Psoas muscle (tissue), 8 donors: ENCODE measurements at regions of chr2 and their contacts with region 1.

Region 1: DNA sequence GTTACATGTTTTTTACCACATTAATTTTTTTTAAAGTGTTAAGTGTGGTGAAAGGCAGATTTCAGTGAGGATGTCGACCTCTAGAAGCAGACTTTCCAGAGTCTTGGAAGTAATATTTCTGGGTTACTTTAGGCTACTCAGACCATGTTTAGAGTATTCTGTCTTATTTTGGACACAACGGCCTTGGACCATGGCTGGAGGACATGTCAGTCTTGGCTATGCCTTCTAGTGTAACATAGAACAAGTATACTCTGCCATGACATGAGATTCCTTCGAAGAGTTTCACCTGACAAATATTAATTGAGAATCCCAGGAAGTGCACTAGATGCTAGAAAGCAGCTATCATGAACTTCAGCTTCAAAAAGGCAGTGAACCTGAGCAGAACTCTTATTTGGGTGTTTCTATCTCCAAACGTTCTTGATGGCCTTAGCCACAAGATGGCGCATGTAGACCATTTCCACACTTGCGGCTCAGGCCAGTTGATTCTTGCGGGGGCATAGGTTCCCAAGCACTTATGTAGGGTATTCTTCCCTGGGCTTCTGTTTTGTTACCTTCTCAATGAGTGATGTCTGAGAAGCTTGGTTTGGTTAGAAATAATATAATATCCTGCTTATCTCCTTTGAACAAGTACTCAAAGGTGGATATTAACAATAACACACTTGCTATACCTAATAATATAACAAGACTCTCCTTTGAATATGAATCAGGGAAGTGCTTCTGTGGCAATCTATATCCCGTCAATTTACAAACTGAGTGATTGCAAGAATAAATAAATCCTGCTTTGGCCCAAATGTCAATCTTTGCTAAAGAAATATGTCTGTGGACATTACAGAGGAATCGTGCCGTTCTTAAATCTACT is 62.0 kb downstream of the CACNB4 start:
- DNase-seq: peak; percentile 41 to 68
- ATAC-seq: peak; percentile 78 to 92 (median 81)
- H3K4me3 ChIP-seq: no peak overlapping the region
- H3K27ac ChIP-seq: no peak overlapping the region
- H3K4me1 ChIP-seq: peaks cover 8% of the 10 kb centered on the region
- H3K27me3 ChIP-seq: no peaks in the 10 kb centered on the region
- CTCF ChIP-seq: peak; percentile 86

Region 2: DNA sequence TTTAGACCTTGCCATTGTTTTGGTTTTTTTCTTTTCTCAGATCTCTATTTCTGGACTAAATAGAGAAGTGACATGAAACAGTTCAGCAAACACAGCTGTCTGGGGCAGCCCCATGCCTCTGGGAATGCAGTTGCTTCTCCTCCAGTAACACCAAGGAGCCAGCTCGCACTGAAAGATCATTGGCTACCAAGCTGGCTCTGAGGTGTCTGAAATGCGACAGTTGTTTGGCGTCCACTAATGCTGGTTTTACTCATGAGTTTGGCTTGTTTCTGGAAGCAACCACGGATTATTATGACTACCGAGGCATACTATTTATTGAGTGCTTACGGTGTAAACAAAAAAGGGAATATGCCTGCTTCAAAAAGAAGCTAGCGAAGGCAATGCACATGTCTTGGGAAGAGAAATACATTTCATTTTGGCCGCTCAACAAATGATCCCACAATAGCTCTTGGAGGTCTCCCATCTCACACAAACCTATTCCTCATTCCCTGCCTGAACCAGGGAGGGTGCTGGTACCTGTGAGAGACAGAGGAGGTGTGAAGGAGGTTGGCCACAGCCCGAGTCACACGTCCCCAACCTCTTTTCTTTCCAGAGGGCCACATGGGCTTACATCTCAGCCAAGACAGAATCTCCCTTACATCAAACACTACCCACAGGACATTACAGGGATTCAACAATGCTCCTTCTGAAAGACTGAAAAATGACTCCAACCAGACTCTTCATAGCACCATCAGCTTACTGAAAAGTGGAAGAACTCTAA is 265.1 kb before region 1 on chr2:
- intact Hi-C with region 1: no loop called
- DNase-seq: peak; percentile 58 to 85
- ATAC-seq: peak; percentile 87 to 93 (median 90)
- H3K4me3 ChIP-seq: peak overlapping the region; percentile 28
- H3K27ac ChIP-seq: peak overlapping the region; percentile 82
- H3K4me1 ChIP-seq: peaks cover 63% of the 10 kb centered on the region
- H3K27me3 ChIP-seq: no peaks in the 10 kb centered on the region
- CTCF ChIP-seq: no peak

Region 3: GRCh38 chr2:151918308-151918707 is 118.5 kb before region 1 on chr2:
- intact Hi-C with region 1: no loop called
- DNase-seq: no peak
- ATAC-seq: no peak
- H3K4me3 ChIP-seq: no peak overlapping the region
- H3K27ac ChIP-seq: no peak overlapping the region
- H3K4me1 ChIP-seq: peaks cover 8% of the 10 kb centered on the region
- H3K27me3 ChIP-seq: no peaks in the 10 kb centered on the region
- CTCF ChIP-seq: no peak

Region 4: DNA sequence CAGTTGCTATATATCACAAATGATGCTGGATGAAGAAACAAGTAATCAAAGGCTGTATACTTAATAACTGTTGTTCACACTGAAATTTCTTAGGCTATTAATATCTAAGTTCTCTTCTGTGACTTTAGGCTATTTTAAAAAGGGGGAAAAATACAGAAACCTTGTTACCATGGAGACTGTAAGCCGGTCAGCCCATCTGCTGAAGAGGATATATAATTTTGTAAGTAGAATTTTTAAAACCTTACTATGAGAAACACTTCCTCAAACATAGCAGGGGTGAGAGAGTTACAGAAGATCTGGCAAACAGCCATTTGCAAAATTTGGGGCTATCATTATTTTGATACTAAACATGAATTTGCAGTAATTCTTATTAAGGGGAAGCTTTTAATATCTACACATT is 34.3 kb after region 1 on chr2:
- intact Hi-C with region 1: no loop called
- DNase-seq: no peak
- ATAC-seq: no peak
- H3K4me3 ChIP-seq: no peak overlapping the region
- H3K27ac ChIP-seq: no peak overlapping the region
- H3K4me1 ChIP-seq: no peaks in the 10 kb centered on the region
- H3K27me3 ChIP-seq: no peaks in the 10 kb centered on the region
- CTCF ChIP-seq: no peak

Region 5: GRCh38 chr2:152089238-152089637 is 52.4 kb after region 1 on chr2:
- intact Hi-C with region 1: loop called in 1 of 2 experiments (anchors 5 kb)
- DNase-seq: no peak
- ATAC-seq: no peak
- H3K4me3 ChIP-seq: no peak overlapping the region
- H3K27ac ChIP-seq: no peak overlapping the region
- H3K4me1 ChIP-seq: no peaks in the 10 kb centered on the region
- H3K27me3 ChIP-seq: no peaks in the 10 kb centered on the region
- CTCF ChIP-seq: no peak

Region 6: GRCh38 chr2:152106464-152106863 is 69.6 kb after region 1 on chr2:
- intact Hi-C with region 1: loop called in 1 of 2 experiments (anchors 5 kb)
- DNase-seq: no peak
- ATAC-seq: no peak
- H3K4me3 ChIP-seq: no peak overlapping the region
- H3K27ac ChIP-seq: no peak overlapping the region
- H3K4me1 ChIP-seq: no peaks in the 10 kb centered on the region
- H3K27me3 ChIP-seq: peaks cover 0 to 2% (median 0%) of the 10 kb centered on the region in 3 donors
- CTCF ChIP-seq: no peak

Region 7: DNA sequence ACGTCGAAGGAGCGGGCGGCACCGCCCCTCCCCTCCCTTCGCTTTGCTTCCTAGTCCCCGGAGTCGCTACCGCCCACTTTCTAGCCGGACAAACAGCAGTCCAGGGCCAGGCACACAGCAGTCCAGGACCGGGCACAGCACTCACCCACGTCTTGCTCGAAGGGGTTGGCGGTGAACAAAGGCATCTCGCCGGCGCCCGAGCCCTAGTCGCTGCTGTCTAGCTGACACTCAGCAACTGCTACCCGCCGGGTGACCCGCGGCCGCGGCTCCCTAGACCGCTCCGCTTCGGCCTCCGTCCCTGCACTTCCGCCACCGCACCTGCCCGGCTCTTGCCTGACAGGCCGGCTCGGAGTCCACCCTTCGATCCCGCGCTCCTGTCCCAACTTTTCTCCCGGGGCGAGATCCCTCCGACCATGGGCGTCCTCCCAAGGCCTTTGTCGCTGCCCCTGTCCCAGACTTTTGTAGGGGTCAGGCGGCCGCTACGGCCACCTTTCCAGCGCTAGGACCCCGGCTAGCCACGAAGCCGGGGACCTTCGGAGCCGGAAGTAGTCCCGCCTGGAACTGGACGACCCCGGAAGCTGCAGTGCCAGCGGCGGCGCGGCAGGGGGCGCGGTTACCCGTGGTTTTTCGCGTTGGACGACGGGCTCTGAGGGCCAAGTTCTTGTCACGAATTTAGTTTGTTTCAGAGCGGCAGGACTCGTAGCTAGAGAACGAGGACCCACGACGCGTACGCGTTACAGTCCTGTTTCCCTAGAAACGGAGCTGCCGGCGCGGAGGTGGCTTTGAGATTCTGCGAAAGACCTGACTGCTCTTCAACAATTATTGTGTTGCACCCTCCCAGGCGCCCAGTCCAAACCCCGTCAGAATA is 138.9 kb after region 1 on chr2 and contains the start of gene STAM2:
- intact Hi-C with region 1: loop called (anchors 5 kb)
- DNase-seq: peak; percentile 93 to 97
- ATAC-seq: peak; percentile 94 to 95 (median 94)
- H3K4me3 ChIP-seq: peak within 1 kb of the TSS; percentile 75
- H3K27ac ChIP-seq: peak within 1 kb of the TSS; percentile 94
- H3K4me1 ChIP-seq: peaks cover 29% of the 10 kb centered on the region
- H3K27me3 ChIP-seq: no peaks in the 10 kb centered on the region
- CTCF ChIP-seq: peak; percentile 96
- total RNA-seq, gene STAM2: 15.5 to 21.1 (median 18.0) TPM

Region 8: GRCh38 chr2:153519257-153519875 is 1482.5 kb after region 1 on chr2:
- intact Hi-C with region 1: loop called in 1 of 2 experiments (anchors 5 kb)
- DNase-seq: peak; percentile 36 to 61
- ATAC-seq: peak in 1 of 4 donors; percentile 42
- H3K4me3 ChIP-seq: no peak overlapping the region
- H3K27ac ChIP-seq: no peak overlapping the region
- H3K4me1 ChIP-seq: no peaks in the 10 kb centered on the region
- H3K27me3 ChIP-seq: peaks cover 0 to 5% (median 0%) of the 10 kb centered on the region in 3 donors
- CTCF ChIP-seq: peak; percentile 82